ENCODE measurements at regions of chr15 and their contacts with region 1.

Region 1: GRCh38 chr15:93265111-93265556 is 176.1 kb upstream of the RGMA start:
- DNase-seq: no peak
- H3K4me3 ChIP-seq: no peak overlapping the region
- H3K27ac ChIP-seq: no peak overlapping the region
- H3K4me1 ChIP-seq: no peaks in the 10 kb centered on the region
- H3K27me3 ChIP-seq: no peaks in the 10 kb centered on the region
- CTCF ChIP-seq: no peak

Region 2: GRCh38 chr15:93231271-93231925 is 33.7 kb before region 1 on chr15:
- CTCF ChIA-PET with region 1: no interaction called
- dilution Hi-C with region 1: loop called (anchors 5 kb)
- in situ Hi-C with region 1: no loop called
- intact Hi-C with region 1: no loop called
- DNase-seq: no peak
- H3K4me3 ChIP-seq: no peak overlapping the region
- H3K27ac ChIP-seq: no peak overlapping the region
- H3K4me1 ChIP-seq: no peaks in the 10 kb centered on the region
- H3K27me3 ChIP-seq: no peaks in the 10 kb centered on the region
- CTCF ChIP-seq: no peak

Region 3: GRCh38 chr15:93331545-93332167 is 66.5 kb after region 1 on chr15:
- CTCF ChIA-PET with region 1: no interaction called
- dilution Hi-C with region 1: loop called (anchors 5 kb)
- in situ Hi-C with region 1: no loop called
- intact Hi-C with region 1: no loop called
- DNase-seq: no peak
- H3K4me3 ChIP-seq: no peak overlapping the region
- H3K27ac ChIP-seq: no peak overlapping the region
- H3K4me1 ChIP-seq: no peaks in the 10 kb centered on the region
- H3K27me3 ChIP-seq: no peaks in the 10 kb centered on the region
- CTCF ChIP-seq: no peak